Left ventricle myocardium superior (tissue), 1 donor: ENCODE measurements at regions of chr3 and their contacts with region 1.

Region 1: DNA sequence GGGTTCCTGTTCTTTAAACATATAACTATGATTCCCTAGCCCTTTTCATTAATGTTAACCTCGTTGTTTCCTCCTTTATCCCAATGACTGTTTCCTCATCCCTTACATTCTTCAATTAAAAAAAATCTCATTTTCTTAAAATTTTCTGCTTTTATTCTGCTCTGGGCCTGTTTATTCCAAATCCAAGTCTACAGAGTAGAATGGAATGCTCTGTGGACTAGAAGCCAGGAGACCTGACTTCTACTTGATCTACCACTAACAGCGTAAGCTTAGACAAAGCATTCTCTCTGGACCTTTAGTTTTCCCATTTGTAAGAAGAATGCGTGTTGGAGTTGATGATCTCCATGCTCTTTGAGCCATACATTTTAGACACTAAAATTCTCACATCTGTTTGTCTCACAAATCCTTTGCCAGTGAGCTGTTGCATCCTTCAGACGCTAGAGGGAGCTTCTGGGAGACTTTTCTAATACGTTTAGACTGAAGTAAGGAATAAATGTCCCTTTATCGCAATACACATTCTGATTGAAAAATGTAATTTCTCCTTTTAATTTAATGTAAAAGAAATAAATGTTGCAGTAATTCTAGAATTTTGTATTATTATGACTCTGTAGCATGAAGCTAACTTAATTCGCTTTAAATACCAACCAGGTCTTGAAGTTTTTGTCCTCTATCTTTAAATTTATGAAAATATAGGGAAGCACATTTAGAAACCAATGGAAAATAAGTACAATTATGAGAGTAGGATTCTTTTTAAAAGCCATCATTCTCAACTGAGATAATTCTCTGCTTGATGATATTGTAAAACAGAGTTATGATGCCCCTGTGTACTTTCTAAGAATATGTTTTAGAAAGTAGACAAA is 21.7 kb upstream of the GMNC start:
- DNase-seq: no peak
- ATAC-seq: no peak

Region 2: GRCh38 chr3:190721330-190721729 is 162.9 kb before region 1 on chr3:
- intact Hi-C with region 1: loop called (anchors 5 kb)
- DNase-seq: no peak
- ATAC-seq: no peak